CD8-positive, alpha-beta T cell (primary cell): ENCODE measurements at regions of chr3 and their contacts with region 1.

Region 1: GRCh38 chr3:53342353-53342752 is 5.0 kb downstream of the DCP1A start:
- DNase-seq: no peak
- ATAC-seq: no peak
- H3K4me3 ChIP-seq: no peak overlapping the region
- H3K4me3 Mint-ChIP-seq: no peak overlapping the region
- H3K27ac ChIP-seq: no peak overlapping the region
- H3K27ac Mint-ChIP-seq: no peak overlapping the region
- H3K4me1 ChIP-seq: peaks cover 24% of the 10 kb centered on the region
- H3K4me1 Mint-ChIP-seq: peaks cover 53% of the 10 kb centered on the region
- H3K27me3 ChIP-seq: no peaks in the 10 kb centered on the region
- H3K27me3 Mint-ChIP-seq: no peaks in the 10 kb centered on the region
- CTCF ChIP-seq: no peak

Region 2: GRCh38 chr3:53354945-53355498 is 12.7 kb after region 1 on chr3:
- CTCF ChIA-PET with region 1: interaction called, 3 read pairs
- POLR2A ChIA-PET with region 1: interaction called, 8 read pairs
- intact Hi-C with region 1: loop called in 1 of 2 experiments (anchors 1 kb)
- DNase-seq: no peak
- ATAC-seq: no peak
- H3K4me3 ChIP-seq: no peak overlapping the region
- H3K4me3 Mint-ChIP-seq: no peak overlapping the region
- H3K27ac ChIP-seq: no peak overlapping the region
- H3K27ac Mint-ChIP-seq: no peak overlapping the region
- H3K4me1 ChIP-seq: no peaks in the 10 kb centered on the region
- H3K4me1 Mint-ChIP-seq: no peaks in the 10 kb centered on the region
- H3K27me3 ChIP-seq: no peaks in the 10 kb centered on the region
- H3K27me3 Mint-ChIP-seq: no peaks in the 10 kb centered on the region
- CTCF ChIP-seq: no peak

Region 3: DNA sequence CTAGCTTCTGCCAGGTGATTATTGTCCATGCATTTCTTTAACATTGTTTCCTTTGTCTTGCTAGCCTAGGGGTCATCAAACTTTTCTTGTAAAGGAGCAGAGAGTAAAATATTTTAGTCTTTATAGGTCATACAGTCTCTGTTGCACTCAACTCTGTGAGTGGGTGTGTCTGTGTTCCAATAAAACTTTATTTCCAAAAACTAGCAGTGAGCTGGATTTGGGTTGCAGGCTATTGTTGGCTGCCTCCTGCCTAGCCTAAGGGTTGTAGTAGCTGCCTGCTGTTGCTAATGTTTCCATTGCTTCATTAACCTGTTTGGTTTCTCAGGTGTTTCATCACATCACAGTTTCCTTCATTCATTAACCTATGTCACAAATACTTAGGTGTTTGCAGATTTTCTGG is 69.0 kb after region 1 on chr3:
- CTCF ChIA-PET with region 1: no interaction called
- POLR2A ChIA-PET with region 1: no interaction called
- intact Hi-C with region 1: no loop called
- DNase-seq: no peak
- ATAC-seq: no peak
- H3K4me3 ChIP-seq: no peak overlapping the region
- H3K4me3 Mint-ChIP-seq: no peak overlapping the region
- H3K27ac ChIP-seq: no peak overlapping the region
- H3K27ac Mint-ChIP-seq: no peak overlapping the region
- H3K4me1 ChIP-seq: no peaks in the 10 kb centered on the region
- H3K4me1 Mint-ChIP-seq: no peaks in the 10 kb centered on the region
- H3K27me3 ChIP-seq: no peaks in the 10 kb centered on the region
- H3K27me3 Mint-ChIP-seq: peaks cover 10% of the 10 kb centered on the region
- CTCF ChIP-seq: no peak